HEK293T (cell line): ENCODE measurements at regions of chr3 and their contacts with region 1.

Region 1: GRCh38 chr3:71693641-71694040 is 31.6 kb downstream of the EIF4E3 start:
- DNase-seq: no peak

Region 2: GRCh38 chr3:71641674-71642073 is 52.0 kb before region 1 on chr3:
- CTCF ChIA-PET with region 1: no interaction called
- POLR2A ChIA-PET with region 1: no interaction called
- DNase-seq: peak; percentile 28

Region 3: DNA sequence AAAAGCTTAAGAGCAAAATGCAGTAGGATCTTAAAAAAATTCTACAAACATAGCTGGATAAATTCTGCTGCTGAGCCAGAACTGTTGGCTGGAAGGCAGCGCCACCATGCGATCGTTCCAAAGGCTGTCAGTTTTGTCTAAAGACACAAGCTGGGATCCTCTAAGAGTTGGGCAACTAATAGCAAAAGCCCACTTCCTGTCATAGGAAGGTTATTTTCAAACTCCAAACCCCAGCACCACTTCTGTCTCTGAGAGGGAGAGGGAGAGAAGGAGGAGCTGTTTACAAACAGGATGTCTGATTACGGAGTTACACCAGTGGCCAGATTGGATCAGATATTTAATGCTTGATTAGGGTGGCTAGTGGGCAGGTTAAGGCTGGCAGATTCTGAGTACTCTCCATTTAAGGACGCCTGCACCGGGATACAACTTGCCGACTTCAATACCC is 12.4 kb before region 1 on chr3:
- CTCF ChIA-PET with region 1: interaction called, 10 read pairs
- POLR2A ChIA-PET with region 1: no interaction called
- DNase-seq: peak; percentile 64

Region 4: DNA sequence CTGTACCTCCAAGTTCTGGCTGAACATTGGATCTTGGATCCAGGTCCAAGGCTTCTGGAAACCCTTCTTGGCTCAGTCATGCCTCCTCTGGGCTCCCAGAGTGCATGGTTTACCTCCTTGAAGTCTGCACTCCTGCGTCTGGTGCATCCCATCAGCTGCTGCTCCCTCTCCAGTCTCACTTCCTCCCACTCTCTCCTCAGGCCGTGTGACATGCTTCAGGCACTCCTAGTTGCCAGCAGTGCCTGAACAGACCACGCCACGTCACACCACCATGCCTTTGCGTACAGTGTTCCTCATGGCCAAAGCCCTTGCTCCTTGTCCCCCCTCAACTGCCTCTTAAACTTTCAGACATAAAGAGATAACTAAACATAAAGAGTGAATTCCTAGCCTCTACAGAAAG is 65.8 kb after region 1 on chr3:
- CTCF ChIA-PET with region 1: no interaction called
- POLR2A ChIA-PET with region 1: no interaction called
- DNase-seq: no peak